ENCODE measurements at regions of chr6 and their contacts with region 1.

Region 1: GRCh38 chr6:106360410-106360988 is at the start of gene CRYBG1:
- DNase-seq: peak; percentile 93
- ATAC-seq: peak; percentile 95
- H3K4me3 Mint-ChIP-seq: peak within 1 kb of the TSS; percentile 86
- H3K27ac Mint-ChIP-seq: no peak within 1 kb of the TSS
- H3K4me1 Mint-ChIP-seq: peaks cover 11% of the 10 kb centered on the region
- H3K27me3 Mint-ChIP-seq: peaks cover 18% of the 10 kb centered on the region
- CTCF ChIP-seq: peak; percentile 99
- total RNA-seq, gene CRYBG1: 9.1 to 10.1 TPM (median 9.3 TPM) in 3 replicates

Region 2: GRCh38 chr6:106026748-106027715 is 333.5 kb before region 1 on chr6:
- CTCF ChIA-PET with region 1: no interaction called
- POLR2A ChIA-PET with region 1: no interaction called
- DNase-seq: no peak
- ATAC-seq: peak; percentile 55
- H3K4me3 Mint-ChIP-seq: no peak overlapping the region
- H3K27ac Mint-ChIP-seq: no peak overlapping the region
- H3K4me1 Mint-ChIP-seq: peaks cover 20% of the 10 kb centered on the region
- H3K27me3 Mint-ChIP-seq: no peaks in the 10 kb centered on the region
- CTCF ChIP-seq: no peak

Region 3: DNA sequence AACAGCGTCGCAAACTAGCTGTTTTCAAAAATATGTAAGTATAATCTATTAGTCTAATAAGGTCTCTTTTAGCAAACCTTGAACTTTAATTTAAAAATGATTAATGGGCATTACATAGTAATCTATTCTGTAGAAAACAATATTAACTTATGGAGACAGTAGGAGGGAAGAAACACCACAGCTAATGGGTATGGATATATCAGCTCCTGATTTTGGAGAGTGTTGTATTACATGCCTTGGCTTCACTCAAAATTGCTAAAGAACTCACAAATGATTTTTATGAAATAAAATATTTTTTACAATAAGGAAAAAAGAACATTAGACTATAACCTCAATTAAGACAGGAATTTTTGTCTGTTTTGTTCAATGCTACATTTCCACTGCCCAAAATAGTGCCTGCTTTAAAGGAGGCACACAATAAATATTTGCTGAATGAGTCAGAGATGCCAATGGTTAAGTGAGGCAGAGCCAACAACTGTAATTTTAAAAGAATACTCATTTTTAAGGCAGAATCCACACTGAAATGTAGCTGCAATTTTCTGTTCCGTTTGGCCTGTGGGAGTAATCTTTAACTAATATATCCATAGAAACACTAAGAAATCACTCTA is 50.6 kb before region 1 on chr6:
- CTCF ChIA-PET with region 1: no interaction called
- POLR2A ChIA-PET with region 1: no interaction called
- DNase-seq: no peak
- ATAC-seq: no peak
- H3K4me3 Mint-ChIP-seq: no peak overlapping the region
- H3K27ac Mint-ChIP-seq: no peak overlapping the region
- H3K4me1 Mint-ChIP-seq: peaks cover 16% of the 10 kb centered on the region
- H3K27me3 Mint-ChIP-seq: no peaks in the 10 kb centered on the region
- CTCF ChIP-seq: no peak

Region 4: DNA sequence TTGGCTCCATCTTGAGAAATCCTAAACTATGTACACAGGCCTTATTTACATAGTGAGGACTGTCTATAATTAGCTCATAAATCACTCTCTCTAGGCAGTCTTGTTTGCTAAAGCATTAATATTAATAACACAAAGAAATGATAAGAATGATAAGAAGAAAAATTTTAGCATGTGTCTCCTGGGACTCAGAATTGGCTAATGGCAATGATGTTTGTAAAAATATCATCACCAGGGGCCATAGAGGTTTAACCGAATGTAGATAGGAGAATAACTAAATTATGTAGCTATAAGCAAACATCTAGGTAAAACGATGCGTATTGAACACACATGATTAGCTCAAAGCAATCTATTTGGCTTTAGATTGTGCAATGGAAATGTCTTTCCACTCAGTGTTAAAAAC is 13.2 kb before region 1 on chr6:
- CTCF ChIA-PET with region 1: interaction called, 15 read pairs
- POLR2A ChIA-PET with region 1: interaction called, 4 read pairs
- DNase-seq: no peak
- ATAC-seq: no peak
- H3K4me3 Mint-ChIP-seq: no peak overlapping the region
- H3K27ac Mint-ChIP-seq: no peak overlapping the region
- H3K4me1 Mint-ChIP-seq: no peaks in the 10 kb centered on the region
- H3K27me3 Mint-ChIP-seq: no peaks in the 10 kb centered on the region
- CTCF ChIP-seq: no peak

Region 5: GRCh38 chr6:106396469-106397220 is 36.1 kb after region 1 on chr6:
- CTCF ChIA-PET with region 1: interaction called, 10 read pairs
- POLR2A ChIA-PET with region 1: interaction called, 6 read pairs
- DNase-seq: no peak
- ATAC-seq: no peak
- H3K4me3 Mint-ChIP-seq: no peak overlapping the region
- H3K27ac Mint-ChIP-seq: no peak overlapping the region
- H3K4me1 Mint-ChIP-seq: peaks cover 2% of the 10 kb centered on the region; the same call in 1 of the 2 replicates
- H3K27me3 Mint-ChIP-seq: no peaks in the 10 kb centered on the region
- CTCF ChIP-seq: no peak

Region 6: GRCh38 chr6:106512048-106512967 is 151.8 kb after region 1 on chr6:
- CTCF ChIA-PET with region 1: interaction called, 17 read pairs
- POLR2A ChIA-PET with region 1: interaction called, 3 read pairs
- DNase-seq: peak; percentile 70
- ATAC-seq: peak; percentile 59
- H3K4me3 Mint-ChIP-seq: peak overlapping the region; percentile 88
- H3K27ac Mint-ChIP-seq: no peak overlapping the region
- H3K4me1 Mint-ChIP-seq: peaks cover 31% of the 10 kb centered on the region
- H3K27me3 Mint-ChIP-seq: peaks cover 72% of the 10 kb centered on the region
- CTCF ChIP-seq: no peak

Region 7: DNA sequence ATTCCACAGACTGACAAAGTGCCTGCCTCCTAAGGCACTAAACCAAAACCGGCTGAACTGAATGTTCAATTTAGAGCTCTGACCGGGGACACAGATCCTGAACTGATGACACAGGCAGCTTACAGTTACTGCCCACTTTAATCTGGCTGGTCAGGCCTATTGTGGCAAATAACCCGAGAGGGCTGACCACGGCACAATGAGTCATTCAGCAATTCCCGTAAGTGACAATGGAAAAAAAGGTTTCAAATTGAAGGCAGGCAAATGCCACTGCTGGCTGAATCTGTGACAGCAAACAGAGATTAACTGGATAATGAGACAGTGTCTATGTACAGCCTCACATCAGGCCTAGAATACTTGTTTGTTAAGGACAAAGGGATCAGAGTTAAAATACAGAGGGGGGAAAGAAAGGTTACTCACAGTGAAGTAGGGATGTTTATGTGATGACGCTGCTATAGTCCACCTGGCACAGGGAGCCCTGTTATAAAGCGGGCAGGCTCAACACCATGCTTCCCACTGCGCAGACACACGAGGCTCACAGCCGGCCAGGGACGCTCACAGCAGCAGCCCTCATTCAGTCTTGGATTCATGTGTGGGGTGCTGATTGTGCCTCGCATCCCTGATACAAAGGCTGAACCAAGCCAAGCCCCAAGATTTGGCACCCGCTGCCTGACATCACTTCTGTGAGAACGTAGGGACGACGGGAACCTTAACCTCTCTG is 214.4 kb after region 1 on chr6:
- CTCF ChIA-PET with region 1: no interaction called
- POLR2A ChIA-PET with region 1: no interaction called
- DNase-seq: no peak
- ATAC-seq: no peak; the same call in 1 of the 2 replicates
- H3K4me3 Mint-ChIP-seq: no peak overlapping the region
- H3K27ac Mint-ChIP-seq: 0 out of 2 replicates have a peak overlapping the region, but pooled peaks have one; percentile 19
- H3K4me1 Mint-ChIP-seq: 0 out of 2 replicates have a peak, but pooled peaks cover 4% of the 10 kb centered on the region
- H3K27me3 Mint-ChIP-seq: no peaks in the 10 kb centered on the region
- CTCF ChIP-seq: no peak

Region 8: DNA sequence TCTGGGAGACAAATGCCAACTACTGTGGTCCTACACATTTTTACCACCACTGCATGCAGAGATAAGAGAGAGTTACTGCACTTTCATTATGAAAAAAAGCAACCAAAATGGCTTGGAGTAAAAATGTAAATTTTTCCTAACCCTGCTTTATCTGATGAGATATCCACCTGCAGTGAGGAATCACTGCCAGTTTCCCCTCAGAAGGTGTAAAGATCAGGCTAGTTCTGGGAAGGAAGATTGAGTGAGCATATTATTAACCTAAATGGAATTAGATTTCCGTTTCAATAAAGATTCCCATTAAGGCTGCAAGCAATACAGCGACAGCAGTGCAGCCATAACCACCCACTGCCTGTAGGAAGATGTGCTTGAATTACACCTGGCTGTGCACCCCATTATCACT is 353.8 kb after region 1 on chr6:
- CTCF ChIA-PET with region 1: no interaction called
- POLR2A ChIA-PET with region 1: interaction called, 13 read pairs
- DNase-seq: no peak
- ATAC-seq: no peak
- H3K4me3 Mint-ChIP-seq: no peak overlapping the region
- H3K27ac Mint-ChIP-seq: no peak overlapping the region
- H3K4me1 Mint-ChIP-seq: peaks cover 44% of the 10 kb centered on the region
- H3K27me3 Mint-ChIP-seq: no peaks in the 10 kb centered on the region
- CTCF ChIP-seq: no peak

Measured in WTC11 (cell line).